Activated T-helper 2 cell treated with anti-CD3 and anti-CD28 coated beads, Interferon-gamma antibody, Interleukin-2, Interleukin-4, amounts not matched to agents 10 μg/mL and 5 μg/mL and 100 μg/mL, durations not matched to agents 14 hours and 24 hours and 36 hours (primary cell): ENCODE measurements at regions of chr6 and their contacts with region 1.

Region 1: GRCh38 chr6:158158748-158159147 is 9.3 kb downstream of the SERAC1 start:
- DNase-seq: no peak
- H3K4me3 Mint-ChIP-seq: no peak overlapping the region
- H3K27ac Mint-ChIP-seq: no peak overlapping the region
- H3K4me1 Mint-ChIP-seq: peaks cover 12% of the 10 kb centered on the region
- H3K27me3 Mint-ChIP-seq: no peaks in the 10 kb centered on the region

Region 2: GRCh38 chr6:156699017-156699421 is 1459.7 kb before region 1 on chr6:
- intact Hi-C with region 1: loop called (anchors 5 kb)
- DNase-seq: no peak
- H3K4me3 Mint-ChIP-seq: no peak overlapping the region
- H3K27ac Mint-ChIP-seq: no peak overlapping the region
- H3K4me1 Mint-ChIP-seq: peaks cover 24% of the 10 kb centered on the region
- H3K27me3 Mint-ChIP-seq: peaks cover 9% of the 10 kb centered on the region

Region 3: GRCh38 chr6:158109744-158110143 is 49.0 kb before region 1 on chr6:
- intact Hi-C with region 1: no loop called
- DNase-seq: no peak
- H3K4me3 Mint-ChIP-seq: no peak overlapping the region
- H3K27ac Mint-ChIP-seq: no peak overlapping the region
- H3K4me1 Mint-ChIP-seq: peaks cover 4% of the 10 kb centered on the region
- H3K27me3 Mint-ChIP-seq: no peaks in the 10 kb centered on the region